AG04449 (cell line): ENCODE measurements at regions of chr11 and their contacts with region 1.

Region 1: GRCh38 chr11:12281571-12282478 is 95.5 kb upstream of the PARVA start:
- DNase-seq: no peak
- H3K4me3 ChIP-seq: no peak overlapping the region
- CTCF ChIP-seq: peak; percentile 84

Region 2: DNA sequence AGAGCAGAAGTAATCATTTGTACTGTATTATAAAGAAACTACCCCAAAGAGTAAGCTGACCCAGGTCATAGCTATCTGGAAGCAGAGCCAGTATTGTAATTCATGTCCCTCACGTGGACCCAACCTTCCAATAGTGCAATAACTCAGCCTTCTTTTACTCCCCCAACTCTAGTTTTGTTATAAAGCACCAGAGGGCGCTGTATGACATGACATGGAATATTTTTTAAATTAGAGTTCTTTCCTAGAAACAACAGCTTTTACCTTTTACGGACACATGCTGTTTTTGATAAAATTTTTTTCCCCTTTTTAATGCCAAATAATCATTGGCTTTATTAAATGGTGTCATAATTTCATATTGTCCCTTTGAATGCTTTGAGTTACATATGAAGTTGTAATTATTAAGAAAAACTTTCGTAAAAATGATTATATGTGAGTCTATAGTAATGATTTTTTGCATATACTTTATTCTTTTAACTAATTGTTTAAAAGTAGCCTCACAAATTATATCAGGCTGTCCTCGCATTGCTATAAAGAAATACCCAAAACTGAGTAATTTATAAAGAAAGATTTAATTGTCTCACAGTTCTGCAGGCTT is 350.3 kb before region 1 on chr11:
- CTCF ChIA-PET with region 1: interaction called, 24 read pairs
- POLR2A ChIA-PET with region 1: no interaction called
- DNase-seq: no peak
- H3K4me3 ChIP-seq: no peak overlapping the region
- CTCF ChIP-seq: peak; percentile 40

Region 3: DNA sequence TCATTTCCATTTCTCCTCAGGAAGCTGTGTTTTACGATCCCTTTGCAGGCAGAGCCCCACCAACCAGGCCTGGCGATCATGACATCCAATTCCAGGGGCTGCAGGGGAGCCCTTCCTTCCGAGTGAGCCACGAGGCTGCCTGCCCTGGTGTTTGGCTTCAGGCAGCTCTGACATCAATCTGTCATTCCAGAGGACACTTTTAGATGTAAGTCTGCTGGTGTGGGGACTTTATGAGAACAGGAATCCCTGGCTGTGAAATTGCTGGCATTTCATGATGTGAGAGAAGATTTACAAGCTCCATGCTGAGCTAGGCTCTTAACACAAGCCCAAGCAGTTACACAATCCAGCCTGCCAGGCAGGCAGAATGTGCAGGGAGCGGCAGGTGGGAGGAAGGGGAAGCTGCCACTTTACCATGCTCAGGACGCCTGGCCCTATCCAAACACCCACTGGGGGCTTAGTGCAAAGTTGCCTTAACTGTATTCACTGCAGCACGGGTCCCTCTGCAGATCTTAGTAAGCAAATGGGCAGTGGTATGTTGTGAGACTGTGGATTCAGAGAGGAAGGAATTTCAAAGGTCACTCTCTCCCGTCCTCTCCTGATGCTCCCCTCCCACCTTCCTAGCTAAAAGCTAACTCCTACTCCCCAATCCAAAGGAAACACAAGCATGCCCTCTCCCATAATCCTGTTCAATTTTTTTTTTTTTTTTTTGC is 214.9 kb before region 1 on chr11:
- CTCF ChIA-PET with region 1: interaction called, 652 read pairs
- POLR2A ChIA-PET with region 1: no interaction called
- DNase-seq: no peak
- H3K4me3 ChIP-seq: no peak overlapping the region
- CTCF ChIP-seq: no peak

Region 4: GRCh38 chr11:12102588-12103410 is 179.0 kb before region 1 on chr11:
- CTCF ChIA-PET with region 1: interaction called, 10 read pairs
- POLR2A ChIA-PET with region 1: no interaction called
- DNase-seq: no peak
- H3K4me3 ChIP-seq: no peak overlapping the region
- CTCF ChIP-seq: no peak

Region 5: GRCh38 chr11:12207384-12208150 is 74.3 kb before region 1 on chr11:
- CTCF ChIA-PET with region 1: interaction called, 14 read pairs
- POLR2A ChIA-PET with region 1: interaction called, 4 read pairs
- DNase-seq: peak; percentile 82
- H3K4me3 ChIP-seq: no peak overlapping the region
- CTCF ChIP-seq: no peak

Region 6: DNA sequence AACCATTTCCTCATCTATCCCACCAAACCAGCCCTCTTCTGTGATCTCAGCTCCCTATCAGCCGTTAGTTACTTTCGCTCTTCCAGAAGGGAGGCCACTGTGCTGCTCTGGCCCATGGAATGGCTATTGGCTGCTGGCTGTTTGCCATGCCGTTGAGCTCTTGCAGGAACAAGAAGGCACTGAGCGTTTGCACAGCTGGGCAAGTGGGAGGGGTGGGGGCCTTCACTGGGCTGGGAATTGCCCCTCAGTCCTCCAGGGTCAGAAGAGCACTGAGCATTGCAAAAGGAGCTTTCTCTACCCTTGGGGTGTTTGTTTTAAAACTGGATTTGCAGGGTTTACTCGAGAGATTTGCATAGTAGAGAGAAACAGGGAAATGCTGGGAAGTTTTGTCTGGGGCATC is 33.5 kb before region 1 on chr11:
- CTCF ChIA-PET with region 1: interaction called, 11 read pairs
- POLR2A ChIA-PET with region 1: no interaction called
- DNase-seq: no peak
- H3K4me3 ChIP-seq: no peak overlapping the region
- CTCF ChIP-seq: no peak